Caco-2 (cell line): ENCODE measurements at regions of chr5 and their contacts with region 1.

Region 1: DNA sequence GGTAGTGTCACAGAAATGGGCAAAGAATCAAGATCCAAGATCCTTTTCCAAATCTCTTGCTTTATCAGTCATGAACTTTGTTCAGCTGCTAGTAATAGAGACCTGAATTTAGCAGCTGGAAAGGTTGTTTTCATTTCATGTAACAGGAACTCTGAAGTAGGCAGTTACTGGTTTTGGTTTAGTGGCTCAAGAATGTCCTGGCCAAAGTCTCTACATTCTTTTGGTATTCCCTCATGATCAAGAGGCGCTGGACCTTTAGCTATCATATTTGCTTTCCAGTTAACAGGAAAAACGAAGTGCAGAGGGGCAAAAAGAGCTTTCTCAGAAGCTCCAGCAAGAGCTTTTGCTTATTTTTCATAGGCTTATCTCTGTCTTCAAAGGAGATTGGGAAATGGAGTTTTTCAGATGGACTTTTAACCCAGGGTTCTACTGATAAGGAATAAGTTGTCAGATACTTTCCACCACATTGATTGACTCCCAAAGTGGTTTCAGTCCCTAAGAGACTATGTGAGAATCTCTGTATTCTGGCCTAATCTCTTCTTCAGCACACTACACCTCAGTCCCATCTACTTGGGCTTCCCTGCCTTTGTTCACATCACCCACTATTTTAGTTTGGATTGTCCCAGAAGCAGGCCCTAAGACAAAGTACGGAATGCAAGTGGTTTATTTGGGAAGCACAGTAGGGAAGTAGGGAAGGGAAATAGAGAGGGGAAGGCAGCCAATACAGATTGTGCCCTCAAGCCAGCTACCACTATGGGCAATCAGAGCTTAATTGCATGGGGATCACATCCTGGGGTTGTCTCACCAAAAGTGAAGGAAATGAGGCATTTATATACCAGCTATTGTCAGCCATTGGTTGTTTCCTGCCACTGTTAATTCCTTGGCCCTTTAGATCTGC is 359.3 kb downstream of the LRRC70 start:
- DNase-seq: peak; percentile 82 to 84
- H3K4me3 ChIP-seq: no peak overlapping the region
- H3K4me3 Mint-ChIP-seq: peak overlapping the region; percentile 23
- H3K27ac Mint-ChIP-seq: peak overlapping the region; percentile 95
- H3K4me1 ChIP-seq: peaks cover 52% of the 10 kb centered on the region
- H3K4me1 Mint-ChIP-seq: peaks cover 47% of the 10 kb centered on the region
- H3K27me3 ChIP-seq: no peaks in the 10 kb centered on the region
- H3K27me3 Mint-ChIP-seq: no peaks in the 10 kb centered on the region
- CTCF ChIP-seq: no peak

Region 2: DNA sequence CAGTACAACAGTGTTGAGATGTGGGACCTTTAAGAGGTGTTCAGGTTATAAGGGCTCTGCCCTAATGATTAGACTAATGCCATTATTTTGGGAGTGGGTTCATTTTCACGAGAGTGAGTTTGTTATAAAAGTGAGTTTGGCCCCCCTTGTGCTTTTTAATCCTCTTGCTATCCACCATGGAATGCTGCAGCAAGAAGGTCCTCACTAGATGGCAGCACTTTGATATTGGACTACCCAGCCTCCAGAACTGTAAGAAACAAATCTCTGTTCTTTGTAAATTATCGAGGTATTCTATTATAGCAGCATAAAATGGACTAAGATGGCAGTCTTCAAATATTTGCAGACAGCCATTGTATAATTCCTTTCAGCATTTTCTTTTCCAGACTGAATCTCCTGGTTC is 146.9 kb before region 1 on chr5:
- CTCF ChIA-PET with region 1: no interaction called
- POLR2A ChIA-PET with region 1: no interaction called
- intact Hi-C with region 1: loop called (anchors 5 kb)
- DNase-seq: no peak
- H3K4me3 ChIP-seq: no peak overlapping the region
- H3K4me3 Mint-ChIP-seq: no peak overlapping the region
- H3K27ac Mint-ChIP-seq: no peak overlapping the region
- H3K4me1 ChIP-seq: no peaks in the 10 kb centered on the region
- H3K4me1 Mint-ChIP-seq: peaks cover 7% of the 10 kb centered on the region
- H3K27me3 ChIP-seq: no peaks in the 10 kb centered on the region
- H3K27me3 Mint-ChIP-seq: no peaks in the 10 kb centered on the region
- CTCF ChIP-seq: peak in 1 of 2 experiments; percentile 36

Region 3: DNA sequence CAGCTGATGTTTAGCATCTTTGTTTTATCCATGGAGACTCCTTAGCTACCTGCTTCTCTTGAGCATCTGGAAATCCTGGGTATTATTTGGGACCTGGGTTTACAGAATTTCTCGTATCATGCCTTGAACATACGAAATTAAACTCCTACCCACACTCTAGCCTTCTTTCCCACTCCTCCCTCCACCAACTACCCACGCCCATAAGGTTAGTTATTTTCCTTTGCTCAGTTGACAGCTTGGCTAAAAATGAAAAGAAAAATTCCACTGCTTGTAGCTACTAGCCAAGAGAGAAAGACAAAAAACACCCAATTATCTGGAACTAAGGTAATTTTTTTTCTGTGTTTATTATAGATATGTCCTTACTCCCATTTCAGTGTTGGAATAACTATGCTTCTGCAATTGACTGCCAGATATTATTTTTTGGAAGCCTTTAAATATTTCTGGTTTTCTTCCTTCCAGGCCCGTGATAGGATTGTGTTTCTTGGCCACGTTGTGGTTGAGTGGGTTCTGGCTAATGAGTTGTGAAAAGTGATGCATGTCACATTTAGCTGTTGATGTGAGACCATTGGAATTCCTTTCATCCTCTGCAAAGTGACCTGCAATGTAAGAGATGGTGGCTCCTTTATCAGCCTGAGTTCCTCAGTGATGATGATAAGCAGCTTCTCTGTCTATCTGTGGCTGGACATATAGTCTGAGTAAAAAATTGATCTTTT is 51.2 kb before region 1 on chr5:
- CTCF ChIA-PET with region 1: interaction called, 4 read pairs
- POLR2A ChIA-PET with region 1: no interaction called
- intact Hi-C with region 1: loop called (anchors 1 kb)
- DNase-seq: peak; percentile 80 to 84
- H3K4me3 ChIP-seq: no peak overlapping the region
- H3K4me3 Mint-ChIP-seq: peak overlapping the region; percentile 58
- H3K27ac Mint-ChIP-seq: peak overlapping the region; percentile 76
- H3K4me1 ChIP-seq: peaks cover 53% of the 10 kb centered on the region
- H3K4me1 Mint-ChIP-seq: peaks cover 29% of the 10 kb centered on the region
- H3K27me3 ChIP-seq: no peaks in the 10 kb centered on the region
- H3K27me3 Mint-ChIP-seq: no peaks in the 10 kb centered on the region
- CTCF ChIP-seq: no peak